CD14-positive monocyte (primary cell): ENCODE measurements at regions of chr17 and their contacts with region 1.

Region 1: DNA sequence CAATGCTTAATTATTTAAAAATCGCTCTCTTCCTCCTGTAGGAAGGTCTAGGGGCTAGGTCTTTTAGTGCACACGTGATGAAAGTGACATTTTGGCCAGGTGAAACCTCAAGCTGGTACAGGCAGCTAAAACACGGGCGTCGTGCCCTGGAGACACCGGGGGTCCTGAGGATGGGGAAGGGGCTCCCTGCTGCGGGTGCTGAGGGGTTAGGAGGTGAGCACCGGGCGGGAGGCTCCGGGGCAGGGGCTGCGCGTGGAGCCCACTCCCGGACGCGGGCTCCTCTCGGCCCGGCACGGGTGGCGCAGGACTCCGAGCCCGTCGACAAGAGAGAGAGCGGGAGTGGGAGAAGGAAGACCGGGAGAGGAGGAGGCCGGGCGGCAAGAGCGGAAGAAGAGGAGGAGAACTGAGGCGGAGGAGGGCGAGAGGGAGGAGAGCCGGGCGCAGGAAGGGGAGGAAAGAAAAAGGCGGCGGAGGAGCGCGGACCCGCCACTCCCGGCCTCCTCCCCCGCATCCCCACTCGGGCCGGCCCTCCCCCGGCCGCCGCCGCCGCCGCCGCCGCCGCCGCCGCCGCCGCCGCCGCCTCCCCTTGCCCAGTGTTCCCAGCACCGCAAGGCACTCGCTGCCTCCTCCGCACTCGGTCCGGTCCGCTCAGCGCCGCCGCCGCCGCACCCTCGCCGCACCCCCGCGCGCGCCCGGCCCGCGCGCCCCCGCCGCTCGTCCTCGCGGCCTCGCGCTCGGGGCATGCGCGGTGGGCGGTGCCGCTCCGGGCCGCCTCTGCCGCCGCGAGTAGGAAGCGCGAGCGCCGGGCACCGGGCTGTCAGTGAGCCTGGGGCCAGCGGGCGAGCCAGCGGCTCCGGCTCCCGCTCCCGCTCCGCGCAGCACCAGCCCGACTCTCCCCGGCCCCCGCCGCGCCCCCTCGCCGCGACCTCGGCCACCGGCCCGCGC is at the start of gene PRKCA:
- DNase-seq: peak; percentile 62 to 76 (median 72)
- H3K4me3 ChIP-seq: peak within 1 kb of the TSS; percentile 60 to 86 (median 85)
- H3K4me3 Mint-ChIP-seq: peak within 1 kb of the TSS; percentile 94 to 99
- H3K27ac ChIP-seq: no peak within 1 kb of the TSS
- H3K27ac Mint-ChIP-seq: peak within 1 kb of the TSS in 6 of 7 donors; percentile 27 to 83 (median 58)
- H3K4me1 ChIP-seq: peaks cover 29 to 35% of the 10 kb centered on the region in 2 donors
- H3K4me1 Mint-ChIP-seq: peaks cover 35% of the 10 kb centered on the region
- H3K27me3 ChIP-seq: peaks cover 9 to 29% of the 10 kb centered on the region in 2 donors
- H3K27me3 Mint-ChIP-seq: peaks cover 16 to 42% (median 23%) of the 10 kb centered on the region in 3 donors
- CTCF ChIP-seq: no peak
- polyA plus RNA-seq, gene PRKCA: 0.22 to 7.1 (median 0.30) TPM

Region 2: GRCh38 chr17:66255527-66255971 is 46.5 kb before region 1 on chr17:
- intact Hi-C with region 1: no loop called
- DNase-seq: no peak
- H3K4me3 ChIP-seq: no peak overlapping the region
- H3K4me3 Mint-ChIP-seq: no peak overlapping the region
- H3K27ac ChIP-seq: no peak overlapping the region
- H3K27ac Mint-ChIP-seq: no peak overlapping the region
- H3K4me1 ChIP-seq: peaks cover 4 to 10% of the 10 kb centered on the region in 2 donors
- H3K4me1 Mint-ChIP-seq: peaks cover 9% of the 10 kb centered on the region
- H3K27me3 ChIP-seq: peaks cover 0 to 3% of the 10 kb centered on the region in 2 donors
- H3K27me3 Mint-ChIP-seq: peaks cover 8 to 16% (median 12%) of the 10 kb centered on the region in 3 donors
- CTCF ChIP-seq: no peak

Region 3: DNA sequence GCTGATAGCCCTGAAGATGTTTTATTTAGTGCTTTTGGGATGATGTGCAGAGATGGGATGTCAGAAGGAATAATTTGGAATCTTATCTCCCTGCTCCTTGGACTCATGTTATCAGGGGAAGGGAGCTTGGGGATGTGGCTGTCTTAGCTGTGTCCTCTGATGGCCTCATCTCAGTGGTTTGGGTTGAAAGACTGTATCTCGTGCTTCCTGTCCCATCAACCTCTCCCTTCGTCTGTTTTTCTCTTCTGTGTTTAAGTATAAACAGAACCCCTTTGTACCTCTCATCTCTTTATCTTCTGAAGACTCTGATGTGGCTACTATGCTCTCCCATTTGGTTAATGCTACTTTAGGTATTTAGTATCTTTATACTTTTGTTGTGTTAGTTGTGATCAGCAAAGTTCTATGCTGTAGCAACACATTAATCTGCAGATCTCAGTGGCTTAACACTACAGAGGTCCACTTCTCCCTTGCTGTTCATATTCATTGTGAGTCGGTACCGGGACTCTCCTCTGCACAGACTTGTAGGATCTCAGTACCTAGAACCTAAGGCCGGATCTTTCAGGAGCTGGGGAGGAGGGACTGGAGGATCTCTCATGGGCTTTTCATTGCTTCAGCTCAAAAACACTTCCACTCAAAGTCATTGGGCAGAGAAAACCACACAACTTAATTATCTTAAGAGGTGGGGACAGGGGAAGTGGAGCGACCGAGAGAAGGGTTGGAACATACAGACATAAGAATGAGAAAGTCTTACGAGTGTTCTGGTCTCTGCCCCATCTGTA is 29.2 kb after region 1 on chr17:
- intact Hi-C with region 1: no loop called
- DNase-seq: no peak
- H3K4me3 ChIP-seq: no peak overlapping the region
- H3K4me3 Mint-ChIP-seq: no peak overlapping the region
- H3K27ac ChIP-seq: no peak overlapping the region
- H3K27ac Mint-ChIP-seq: no peak overlapping the region
- H3K4me1 ChIP-seq: peaks cover 0 to 7% of the 10 kb centered on the region in 2 donors
- H3K4me1 Mint-ChIP-seq: peaks cover 15% of the 10 kb centered on the region
- H3K27me3 ChIP-seq: no peaks in the 10 kb centered on the region
- H3K27me3 Mint-ChIP-seq: peaks cover 4 to 5% (median 5%) of the 10 kb centered on the region in 3 donors
- CTCF ChIP-seq: no peak

Region 4: DNA sequence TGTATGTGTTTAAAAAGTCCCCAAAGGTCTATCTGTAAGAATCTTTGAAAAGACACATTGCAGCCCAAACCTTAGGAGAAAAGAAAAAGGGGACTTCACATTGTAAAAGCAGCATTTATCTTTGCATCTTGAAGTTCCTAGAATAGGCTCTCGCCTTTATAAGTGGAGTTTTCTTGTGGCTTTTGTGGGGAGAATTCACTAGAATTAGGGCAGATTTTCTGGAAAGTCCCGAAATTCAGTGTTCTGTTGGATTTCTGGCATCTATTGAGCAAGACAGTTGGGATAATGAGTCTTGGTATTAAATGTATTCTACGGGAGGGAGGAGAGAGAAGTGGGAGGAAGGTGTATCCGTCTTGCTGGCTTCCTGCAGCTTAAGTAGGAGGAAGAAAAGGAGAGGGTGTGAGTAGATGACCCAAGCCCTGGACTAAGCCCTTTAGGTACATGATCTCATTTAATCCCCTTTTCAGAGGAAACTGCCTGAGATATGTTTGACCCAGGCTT is 63.0 kb after region 1 on chr17:
- intact Hi-C with region 1: no loop called
- DNase-seq: no peak
- H3K4me3 ChIP-seq: no peak overlapping the region
- H3K4me3 Mint-ChIP-seq: peak overlapping the region in 1 of 2 donors; percentile 43
- H3K27ac ChIP-seq: no peak overlapping the region
- H3K27ac Mint-ChIP-seq: peak overlapping the region in 1 of 7 donors; percentile 2
- H3K4me1 ChIP-seq: no peaks in the 10 kb centered on the region
- H3K4me1 Mint-ChIP-seq: peaks cover 10% of the 10 kb centered on the region
- H3K27me3 ChIP-seq: no peaks in the 10 kb centered on the region
- H3K27me3 Mint-ChIP-seq: peaks cover 2 to 5% (median 4%) of the 10 kb centered on the region in 3 donors
- CTCF ChIP-seq: no peak

Region 5: DNA sequence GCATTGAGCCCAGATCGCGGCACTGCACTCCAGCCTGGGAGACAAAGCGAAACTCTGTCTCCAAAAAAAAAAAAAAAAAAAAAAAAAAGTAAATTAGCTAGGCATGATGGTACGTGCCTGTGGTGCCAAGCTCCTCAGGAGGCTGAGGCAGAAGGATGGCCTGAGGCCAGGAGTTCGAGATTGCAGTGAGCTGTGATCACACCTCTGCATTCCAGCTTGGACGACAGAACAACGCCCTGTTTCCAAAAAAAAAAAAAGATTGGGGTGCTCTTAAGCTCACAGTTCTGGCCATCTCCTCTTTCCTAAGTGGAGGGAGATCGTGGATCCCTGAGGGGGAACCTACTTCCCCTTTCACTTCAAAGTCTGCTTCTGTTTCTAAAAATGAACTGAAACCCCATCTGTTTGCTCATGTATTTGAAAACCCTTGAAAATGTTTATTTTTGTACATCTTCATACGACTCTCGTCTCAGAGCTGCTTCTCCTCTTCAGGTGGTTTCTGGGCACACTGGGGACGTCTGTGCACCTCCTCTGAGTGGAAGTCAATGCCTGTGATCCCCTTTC is 139.1 kb after region 1 on chr17:
- intact Hi-C with region 1: loop called in 1 of 2 experiments (anchors 10 kb)
- DNase-seq: peak in 2 of 3 donors; percentile 63 to 64
- H3K4me3 ChIP-seq: peak overlapping the region; percentile 36 to 72 (median 38)
- H3K4me3 Mint-ChIP-seq: peak overlapping the region; percentile 75 to 86
- H3K27ac ChIP-seq: peak overlapping the region; percentile 53 to 74
- H3K27ac Mint-ChIP-seq: peak overlapping the region; percentile 83 to 96 (median 90)
- H3K4me1 ChIP-seq: peaks cover 49 to 54% of the 10 kb centered on the region in 2 donors
- H3K4me1 Mint-ChIP-seq: peaks cover 35% of the 10 kb centered on the region
- H3K27me3 ChIP-seq: no peaks in the 10 kb centered on the region
- H3K27me3 Mint-ChIP-seq: no peaks in the 10 kb centered on the region
- CTCF ChIP-seq: no peak

Region 6: DNA sequence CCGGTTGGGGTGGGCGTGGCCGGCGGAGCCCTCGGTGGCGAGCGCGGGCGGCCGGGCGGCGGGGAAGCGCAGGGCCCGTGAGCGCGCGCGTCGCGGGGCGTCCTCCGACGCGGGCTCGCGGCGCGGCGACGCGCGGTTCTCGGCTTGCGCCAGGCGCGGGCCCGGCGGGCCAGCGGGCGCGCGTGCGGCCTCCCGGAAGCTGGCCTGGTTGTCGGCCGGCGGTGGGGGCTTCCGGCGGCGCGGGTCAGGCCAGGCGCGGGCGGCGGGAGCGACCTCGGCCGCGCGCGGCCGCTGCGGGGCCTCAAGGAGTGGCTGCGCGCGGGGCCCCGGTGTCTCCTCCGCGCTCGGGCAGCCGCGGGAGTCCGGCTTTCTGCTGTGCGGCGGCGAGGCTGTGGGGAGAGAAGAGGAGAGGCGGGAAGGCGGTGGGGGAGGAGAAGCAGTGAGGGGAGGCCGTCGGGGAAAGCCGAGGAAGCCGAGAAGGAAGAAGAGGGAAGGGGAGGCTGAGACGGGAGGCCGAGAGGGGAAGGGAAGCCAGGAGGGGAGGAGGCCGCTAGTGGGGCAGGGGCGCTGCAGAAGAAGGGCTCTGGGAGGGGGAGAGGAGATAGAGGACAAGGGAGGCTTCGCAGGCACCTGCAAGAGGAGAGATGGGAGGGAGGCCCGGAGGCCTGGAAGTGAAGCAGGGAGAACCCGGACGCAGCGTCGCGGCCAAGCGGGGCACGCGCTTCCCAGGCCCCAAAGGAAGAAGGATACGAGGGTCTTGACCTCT is 1691.7 kb after region 1 on chr17:
- intact Hi-C with region 1: loop called in 1 of 2 experiments (anchors 10 kb)
- DNase-seq: peak; percentile 73 to 86 (median 80)
- H3K4me3 ChIP-seq: peak overlapping the region; percentile 58 to 84 (median 58)
- H3K4me3 Mint-ChIP-seq: peak overlapping the region; percentile 83
- H3K27ac ChIP-seq: peak overlapping the region; percentile 73 to 74
- H3K27ac Mint-ChIP-seq: peak overlapping the region; percentile 79 to 90 (median 82)
- H3K4me1 ChIP-seq: peaks cover 31 to 40% of the 10 kb centered on the region in 2 donors
- H3K4me1 Mint-ChIP-seq: peaks cover 39% of the 10 kb centered on the region
- H3K27me3 ChIP-seq: peaks cover 25 to 36% of the 10 kb centered on the region in 2 donors
- H3K27me3 Mint-ChIP-seq: peaks cover 34 to 46% (median 42%) of the 10 kb centered on the region in 3 donors
- CTCF ChIP-seq: no peak